SK-N-SH (cell line): ENCODE measurements at regions of chr10 and their contacts with region 1.

Region 1: DNA sequence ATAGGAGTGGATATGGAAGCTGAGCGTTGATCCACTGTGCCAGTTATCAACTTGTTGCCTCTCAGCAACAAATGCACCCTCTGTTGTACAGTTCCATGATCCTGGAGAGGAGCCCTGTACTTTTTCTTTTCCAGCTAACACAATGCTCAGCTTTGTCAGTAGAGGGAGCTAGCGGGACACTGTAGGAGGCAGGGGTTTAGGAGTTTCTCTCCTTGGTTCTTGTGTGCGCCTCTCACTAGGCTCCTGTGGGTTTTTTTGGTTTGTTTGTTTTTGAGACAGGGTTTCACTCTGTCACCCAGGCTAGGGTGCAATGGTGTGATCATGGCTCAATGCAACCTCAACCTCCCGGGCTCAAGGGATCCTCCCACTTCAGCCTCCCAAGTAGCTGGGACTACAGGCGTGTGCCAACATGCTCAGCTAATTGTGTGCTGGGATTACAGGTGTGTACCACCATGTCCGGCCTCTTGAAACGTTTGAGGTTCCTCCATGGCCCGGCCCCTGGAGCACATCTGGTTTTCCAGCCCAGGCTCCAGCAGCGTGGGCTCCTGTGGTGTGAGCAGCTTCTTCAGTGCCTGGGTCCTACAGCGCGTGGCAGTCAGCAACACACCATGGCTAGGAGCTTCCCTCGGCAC is 12.0 kb upstream of the MARVELD1 start:
- DNase-seq: peak; percentile 78
- H3K4me3 ChIP-seq: no peak overlapping the region; a peak in 1 of 4 replicates
- H3K27ac ChIP-seq: no peak overlapping the region
- H3K4me1 ChIP-seq: no peaks in the 10 kb centered on the region
- H3K27me3 ChIP-seq: no peaks in the 10 kb centered on the region
- CTCF ChIP-seq: peak; percentile 86
- EP300 ChIP-seq: no peak
- RAD21 ChIP-seq: peak; percentile 88

Region 2: DNA sequence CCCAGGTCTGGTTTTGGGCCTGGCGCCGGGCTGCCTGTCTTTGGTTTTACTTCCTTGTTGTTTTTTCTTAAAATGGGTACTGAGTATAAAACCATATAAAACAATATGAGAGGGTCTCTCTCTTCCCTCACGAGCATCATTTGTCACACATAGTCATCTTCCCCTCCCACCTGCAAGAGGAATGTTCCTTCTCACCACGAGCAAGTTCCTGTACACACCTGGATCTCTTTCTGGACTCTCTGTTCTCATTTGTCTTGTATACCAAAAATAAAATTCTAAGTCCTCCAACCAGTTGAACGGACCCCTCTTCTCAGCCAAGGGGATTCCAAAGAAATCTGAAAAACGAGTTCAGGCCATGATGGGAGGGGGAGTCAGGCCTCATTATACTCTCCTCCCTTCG is 139.9 kb before region 1 on chr10:
- CTCF ChIA-PET with region 1: no interaction called
- POLR2A ChIA-PET with region 1: no interaction called
- DNase-seq: no peak
- H3K4me3 ChIP-seq: no peak overlapping the region
- H3K27ac ChIP-seq: no peak overlapping the region
- H3K4me1 ChIP-seq: no peaks in the 10 kb centered on the region
- H3K27me3 ChIP-seq: no peaks in the 10 kb centered on the region
- CTCF ChIP-seq: no peak
- EP300 ChIP-seq: no peak
- RAD21 ChIP-seq: no peak

Region 3: DNA sequence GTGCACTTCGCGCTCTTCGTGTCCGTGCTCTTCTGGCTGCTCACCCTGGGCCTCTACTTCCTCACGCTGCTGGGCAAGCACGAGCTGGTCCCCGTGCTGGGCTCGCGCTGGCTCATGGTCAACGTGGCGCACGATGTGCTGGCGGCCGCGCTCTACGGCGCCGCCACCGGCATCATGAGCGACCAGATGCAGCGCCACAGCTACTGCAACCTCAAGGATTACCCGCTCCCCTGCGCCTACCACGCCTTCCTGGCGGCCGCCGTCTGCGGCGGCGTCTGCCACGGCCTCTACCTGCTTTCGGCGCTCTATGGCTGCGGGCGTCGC is 12.5 kb after region 1 on chr10:
- CTCF ChIA-PET with region 1: interaction called, 29 read pairs
- POLR2A ChIA-PET with region 1: interaction called, 3 read pairs
- DNase-seq: no peak
- H3K4me3 ChIP-seq: peak overlapping the region; percentile 64 to 71
- H3K27ac ChIP-seq: peak overlapping the region; percentile 64 to 84
- H3K4me1 ChIP-seq: peaks cover 19 to 27% of the 10 kb centered on the region in 2 experiments; a peak in 3 of 4 replicates
- H3K27me3 ChIP-seq: no peaks in the 10 kb centered on the region
- CTCF ChIP-seq: peak; percentile 29; the same call in 1 of the 2 replicates
- EP300 ChIP-seq: no peak
- RAD21 ChIP-seq: no peak

Region 4: DNA sequence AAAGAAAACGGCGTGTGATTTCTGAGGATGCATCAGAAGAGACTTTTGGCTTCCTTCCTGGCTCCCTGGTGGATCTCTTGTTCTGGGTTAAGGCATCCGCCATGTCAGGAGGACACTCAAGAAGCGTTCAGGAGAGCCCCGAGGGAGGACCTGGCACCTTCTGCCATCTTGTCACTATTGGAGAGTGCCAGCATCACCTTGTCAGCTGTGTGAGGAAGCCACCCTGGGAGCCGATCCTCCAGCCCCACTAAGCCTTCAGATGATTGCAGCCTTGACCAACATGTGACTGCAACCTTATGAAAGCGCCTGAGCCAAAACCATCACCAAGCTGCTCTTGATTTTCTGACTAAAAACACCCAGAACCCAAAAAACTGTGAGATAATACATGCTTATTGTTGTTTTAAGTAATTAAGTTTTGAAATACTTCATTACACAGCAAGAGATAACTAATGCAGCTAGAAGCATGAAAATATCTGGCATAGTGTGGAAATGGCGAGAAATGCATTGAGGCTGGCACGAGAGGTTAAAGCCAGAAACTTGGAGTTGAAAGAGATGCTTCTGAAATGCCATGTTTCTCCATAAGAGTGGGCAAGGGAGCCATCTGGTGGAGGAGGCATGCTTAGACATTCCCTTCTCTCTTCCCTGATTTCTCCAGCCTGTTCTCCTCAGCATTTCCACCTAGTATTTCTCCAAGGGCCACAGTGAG is 29.9 kb after region 1 on chr10:
- CTCF ChIA-PET with region 1: interaction called, 687 read pairs
- POLR2A ChIA-PET with region 1: no interaction called
- DNase-seq: peak; percentile 70
- H3K4me3 ChIP-seq: peak overlapping the region in 1 of 2 experiments; percentile 10; a peak in 1 of 4 replicates
- H3K27ac ChIP-seq: no peak overlapping the region
- H3K4me1 ChIP-seq: peaks cover 0 to under 1% of the 10 kb centered on the region in 2 experiments; a peak in 1 of 4 replicates
- H3K27me3 ChIP-seq: no peaks in the 10 kb centered on the region
- CTCF ChIP-seq: peak; percentile 88
- EP300 ChIP-seq: no peak
- RAD21 ChIP-seq: peak; percentile 99